Mucosa of descending colon (tissue), 3 donors: ENCODE measurements at regions of chr3 and their contacts with region 1.

Region 1: GRCh38 chr3:56988458-56989168 is 71.9 kb upstream of the SPATA12 start:
- DNase-seq: peak in 2 of 3 donors; percentile 67 to 84
- ATAC-seq: peak; percentile 73
- H3K4me3 ChIP-seq: no peak overlapping the region
- H3K4me1 ChIP-seq: peaks cover 30% of the 10 kb centered on the region
- CTCF ChIP-seq: peak; percentile 42

Region 2: DNA sequence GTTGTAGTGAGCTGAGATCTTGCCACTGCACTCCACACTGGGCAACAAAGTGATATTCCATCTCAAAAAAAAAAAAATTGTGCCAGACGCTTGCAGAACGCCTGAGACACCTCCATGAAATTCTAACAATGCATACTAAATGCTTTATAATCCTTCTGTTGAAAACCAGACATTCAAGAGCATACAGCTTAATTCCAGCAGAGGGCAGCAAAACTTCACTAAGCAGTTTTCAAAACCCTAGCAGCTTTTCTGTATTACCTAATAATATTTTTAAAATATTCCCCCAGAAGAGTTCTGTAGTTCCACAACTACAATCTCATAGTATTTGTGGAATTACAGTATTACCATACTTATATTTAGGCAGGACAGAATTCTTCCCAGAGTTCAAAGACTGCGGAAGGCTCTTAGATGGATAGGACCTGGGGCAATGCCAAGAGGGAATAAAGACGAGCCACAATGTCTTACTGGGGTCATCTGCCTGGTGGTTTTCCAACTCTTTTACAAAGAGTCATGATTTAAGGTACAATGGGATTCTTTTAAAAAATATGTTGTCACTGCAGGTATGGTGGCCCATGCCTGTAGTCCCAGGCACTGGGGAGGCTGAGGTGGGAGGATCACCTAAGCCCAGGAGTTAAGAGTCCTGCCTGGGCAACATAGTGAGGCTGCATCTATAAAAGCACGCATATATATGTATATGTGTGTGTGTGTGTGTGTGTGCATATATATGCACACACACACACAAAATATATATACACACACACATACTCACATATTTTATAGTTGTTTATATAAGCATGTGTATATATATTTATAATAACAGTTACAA is 285.9 kb before region 1 on chr3:
- intact Hi-C with region 1: loop called (anchors 1 to 5 kb)
- DNase-seq: peak in 1 of 3 donors; percentile 83
- ATAC-seq: peak; percentile 75
- H3K4me3 ChIP-seq: no peak overlapping the region
- H3K4me1 ChIP-seq: no peaks in the 10 kb centered on the region
- CTCF ChIP-seq: peak; percentile 45